Activated B cell treated with CpG ODN at 0.5 μM for 24 hours (primary cell): ENCODE measurements at regions of chr5 and their contacts with region 1.

Region 1: DNA sequence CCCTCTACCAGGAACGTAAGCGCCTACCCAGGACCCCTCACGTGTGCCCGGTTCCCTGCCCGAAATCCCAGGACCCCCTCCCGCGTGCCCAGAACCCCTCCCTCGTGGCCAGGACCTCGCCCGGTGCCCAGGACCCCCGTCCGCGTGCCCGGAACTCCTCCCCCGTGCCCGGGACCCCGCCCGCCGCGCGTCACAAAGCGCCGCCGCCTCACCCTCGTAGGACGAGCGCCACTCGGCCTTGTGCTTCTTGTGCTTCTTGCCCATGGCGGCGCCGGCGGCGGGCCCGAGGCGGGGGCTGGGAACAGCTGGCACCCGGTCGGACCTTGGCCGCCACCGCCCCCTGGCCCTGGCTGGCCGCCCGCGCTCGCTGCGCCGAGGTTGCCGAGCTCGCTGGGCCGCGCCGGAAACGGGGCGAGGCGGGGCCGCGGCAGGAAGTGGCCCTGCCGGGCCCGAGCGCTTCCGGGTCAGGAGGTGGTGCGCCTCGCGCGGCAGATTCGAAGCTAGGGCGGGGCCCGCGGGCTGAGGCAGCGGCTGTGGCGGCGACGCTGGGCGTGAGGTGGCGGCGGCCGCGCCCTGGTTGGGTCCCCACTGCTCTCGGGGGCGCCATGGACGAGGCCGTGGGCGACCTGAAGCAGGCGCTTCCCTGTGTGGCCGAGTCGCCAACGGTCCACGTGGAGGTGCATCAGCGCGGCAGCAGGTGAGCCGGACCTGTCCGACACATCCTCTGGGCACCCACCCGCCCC is at the starts of genes BRD9 and TRIP13:
- DNase-seq: peak; percentile 85
- ATAC-seq: peak; percentile 94
- H3K4me3 Mint-ChIP-seq: peak within 1 kb of the TSS; percentile 88
- H3K27ac Mint-ChIP-seq: peak within 1 kb of the TSS; percentile 76
- H3K4me1 Mint-ChIP-seq: peaks cover 15% of the 10 kb centered on the region
- H3K27me3 Mint-ChIP-seq: no peaks in the 10 kb centered on the region
- CTCF ChIP-seq: no peak
- total RNA-seq, gene BRD9: 53.0 and 67.8 TPM in 2 replicates
- total RNA-seq, gene TRIP13: 3.5 and 4.1 TPM in 2 replicates

Region 2: GRCh38 chr5:776792-777711 is 115.5 kb before region 1 on chr5:
- CTCF ChIA-PET with region 1: no interaction called
- POLR2A ChIA-PET with region 1: no interaction called
- intact Hi-C with region 1: loop called (anchors 5 kb)
- DNase-seq: peak; percentile 13
- ATAC-seq: no peak
- H3K4me3 Mint-ChIP-seq: no peak overlapping the region
- H3K27ac Mint-ChIP-seq: no peak overlapping the region
- H3K4me1 Mint-ChIP-seq: no peaks in the 10 kb centered on the region
- H3K27me3 Mint-ChIP-seq: peaks cover 8% of the 10 kb centered on the region
- CTCF ChIP-seq: no peak